ENCODE measurements at regions of chr2 and their contacts with region 1.

Region 1: GRCh38 chr2:61295981-61296380 is 134.0 kb downstream of the C2orf74 start:
- DNase-seq: no peak
- H3K4me3 ChIP-seq: no peak overlapping the region
- H3K27ac ChIP-seq: no peak overlapping the region
- H3K4me1 ChIP-seq: no peaks in the 10 kb centered on the region
- H3K27me3 ChIP-seq: no peaks in the 10 kb centered on the region
- CTCF ChIP-seq: no peak

Region 2: DNA sequence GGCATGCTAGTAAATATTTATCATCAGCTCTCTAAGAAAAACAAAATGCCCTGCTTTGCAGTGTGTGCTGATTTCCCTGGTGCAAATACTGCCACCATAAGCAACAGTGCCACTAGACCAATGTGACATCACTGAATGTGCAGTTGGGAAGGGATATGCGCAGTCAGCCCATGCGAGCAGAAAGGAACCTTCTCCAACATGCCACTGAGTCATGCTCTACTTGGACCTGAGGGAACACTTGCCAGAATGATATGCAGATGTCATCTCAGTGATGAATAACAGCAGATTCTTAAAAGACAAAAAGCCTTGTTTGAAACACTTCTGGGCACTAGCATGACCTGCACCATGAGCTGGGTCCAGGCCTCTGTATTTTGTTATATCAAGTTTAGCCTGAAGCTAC is 469.9 kb before region 1 on chr2:
- CTCF ChIA-PET with region 1: no interaction called
- POLR2A ChIA-PET with region 1: no interaction called
- intact Hi-C with region 1: no loop called
- DNase-seq: no peak
- H3K4me3 ChIP-seq: no peak overlapping the region
- H3K27ac ChIP-seq: no peak overlapping the region
- H3K4me1 ChIP-seq: no peaks in the 10 kb centered on the region
- H3K27me3 ChIP-seq: no peaks in the 10 kb centered on the region
- CTCF ChIP-seq: no peak

Region 3: DNA sequence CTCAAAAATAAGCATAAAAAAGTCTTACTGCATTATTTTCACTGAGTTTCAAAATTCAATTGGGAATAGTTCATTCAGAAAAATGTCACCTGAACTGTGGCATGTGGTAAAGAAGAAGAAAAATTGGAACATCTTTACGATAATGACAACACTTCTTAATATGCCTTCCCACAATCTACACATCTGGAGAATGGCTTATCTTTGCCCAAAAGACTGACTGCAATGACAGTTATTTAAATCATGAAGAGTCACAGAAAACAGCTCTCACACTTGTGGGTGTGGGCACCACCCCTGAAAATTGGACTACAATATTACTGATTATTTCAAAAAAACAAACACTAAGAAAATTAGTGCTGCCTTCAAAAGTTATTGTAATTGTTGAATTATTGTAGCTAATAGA is 22.6 kb after region 1 on chr2:
- CTCF ChIA-PET with region 1: no interaction called
- POLR2A ChIA-PET with region 1: no interaction called
- intact Hi-C with region 1: loop called (anchors 1 kb)
- DNase-seq: no peak
- H3K4me3 ChIP-seq: no peak overlapping the region
- H3K27ac ChIP-seq: no peak overlapping the region
- H3K4me1 ChIP-seq: no peaks in the 10 kb centered on the region
- H3K27me3 ChIP-seq: no peaks in the 10 kb centered on the region
- CTCF ChIP-seq: no peak

Measured in A673 (cell line).